Posterior vena cava (tissue), 2 donors: ENCODE measurements at regions of chr6 and their contacts with region 1.

Region 1: GRCh38 chr6:16078064-16078463 is 50.8 kb upstream of the MYLIP start:
- DNase-seq: no peak

Region 2: DNA sequence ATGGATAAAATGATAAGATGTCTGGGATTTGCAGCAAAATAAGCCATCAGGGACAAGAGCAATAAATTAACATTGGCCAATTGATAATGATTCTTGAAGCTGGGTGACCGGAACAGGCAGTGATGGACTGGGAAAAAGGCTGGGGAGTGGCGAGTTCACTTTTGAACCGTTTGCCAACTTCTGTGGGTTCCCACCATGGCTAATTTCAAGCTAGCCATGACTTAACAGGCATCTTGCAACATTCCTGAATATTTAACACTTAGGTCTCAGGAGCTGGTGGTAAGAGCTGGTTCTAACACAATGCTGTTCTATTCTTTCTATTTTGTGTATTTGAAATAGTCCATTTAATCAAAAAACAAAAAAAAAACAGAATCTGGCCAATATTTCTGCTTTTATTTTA is 1998.1 kb before region 1 on chr6:
- intact Hi-C with region 1: loop called in 1 of 2 experiments (anchors 5 kb)
- DNase-seq: no peak